ENCODE measurements at regions of chr9 and their contacts with region 1.

Region 1: DNA sequence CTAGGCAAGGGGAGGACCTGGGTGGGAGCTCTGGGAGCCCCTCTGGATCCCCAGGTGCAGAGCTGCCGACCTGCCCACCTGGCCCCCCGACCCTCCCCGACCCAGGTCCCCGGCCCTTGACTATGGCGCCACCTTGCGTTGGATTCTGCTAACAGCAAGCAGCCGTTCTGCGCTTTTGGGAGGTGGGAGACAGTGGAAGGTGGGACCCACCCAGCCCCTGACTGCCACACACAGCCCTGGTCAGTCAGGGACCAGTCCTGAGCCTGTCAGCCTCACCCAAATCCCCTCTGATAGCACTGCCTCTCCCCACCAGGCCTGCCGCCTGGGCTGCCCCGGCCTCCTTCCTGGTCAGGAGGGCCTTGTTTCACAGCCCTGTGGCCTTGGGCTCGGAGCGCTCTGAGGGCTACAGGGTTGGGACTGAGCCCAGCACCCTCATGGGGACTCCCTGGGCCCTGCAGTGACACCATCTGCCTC is 77.9 kb downstream of the HMCN2 start:
- DNase-seq: peak in 3 of 7 donors; percentile 22 to 43 (median 42)
- H3K4me3 ChIP-seq: no peak overlapping the region
- H3K27ac ChIP-seq: no peak overlapping the region
- H3K4me1 ChIP-seq: no peaks in the 10 kb centered on the region
- H3K27me3 ChIP-seq: no peaks in the 10 kb centered on the region
- CTCF ChIP-seq: peak; percentile 44 to 76 (median 72)
- POLR2A ChIP-seq: no peak

Region 2: GRCh38 chr9:130107234-130107861 is 236.1 kb before region 1 on chr9:
- intact Hi-C with region 1: loop called in 1 of 2 experiments (anchors 5 kb)
- DNase-seq: peak; percentile 77 to 96 (median 89)
- H3K4me3 ChIP-seq: no peak overlapping the region
- H3K27ac ChIP-seq: peak overlapping the region in 2 of 5 donors; percentile 29 to 35
- H3K4me1 ChIP-seq: peaks cover 0 to 18% of the 10 kb centered on the region in 2 donors
- H3K27me3 ChIP-seq: no peaks in the 10 kb centered on the region
- CTCF ChIP-seq: peak; percentile 75 to 90 (median 81)
- POLR2A ChIP-seq: no peak

Region 3: GRCh38 chr9:130172161-130172857 is 171.2 kb before region 1 on chr9 and contains the start of gene NCS1:
- intact Hi-C with region 1: no loop called
- DNase-seq: peak; percentile 79 to 89 (median 85)
- H3K4me3 ChIP-seq: peak within 1 kb of the TSS in 3 of 4 donors; percentile 56 to 80 (median 56)
- H3K27ac ChIP-seq: peak within 1 kb of the TSS in 4 of 5 donors; percentile 33 to 80 (median 76)
- H3K4me1 ChIP-seq: peaks cover 8 to 15% of the 10 kb centered on the region in 2 donors
- H3K27me3 ChIP-seq: no peaks in the 10 kb centered on the region
- CTCF ChIP-seq: no peak
- POLR2A ChIP-seq: no peak
- total RNA-seq, gene NCS1: 4.0 to 87.6 (median 38.9) TPM

Region 4: GRCh38 chr9:130246126-130246525 is 97.4 kb before region 1 on chr9:
- intact Hi-C with region 1: loop called in 1 of 2 experiments (anchors 5 kb)
- DNase-seq: no peak
- H3K4me3 ChIP-seq: no peak overlapping the region
- H3K27ac ChIP-seq: no peak overlapping the region
- H3K4me1 ChIP-seq: peaks cover 0 to 6% of the 10 kb centered on the region in 2 donors
- H3K27me3 ChIP-seq: no peaks in the 10 kb centered on the region
- CTCF ChIP-seq: no peak
- POLR2A ChIP-seq: no peak

Measured in adrenal gland (tissue), 19 donors.